Body of pancreas (tissue), 4 donors: ENCODE measurements at regions of chr10 and their contacts with region 1.

Region 1: DNA sequence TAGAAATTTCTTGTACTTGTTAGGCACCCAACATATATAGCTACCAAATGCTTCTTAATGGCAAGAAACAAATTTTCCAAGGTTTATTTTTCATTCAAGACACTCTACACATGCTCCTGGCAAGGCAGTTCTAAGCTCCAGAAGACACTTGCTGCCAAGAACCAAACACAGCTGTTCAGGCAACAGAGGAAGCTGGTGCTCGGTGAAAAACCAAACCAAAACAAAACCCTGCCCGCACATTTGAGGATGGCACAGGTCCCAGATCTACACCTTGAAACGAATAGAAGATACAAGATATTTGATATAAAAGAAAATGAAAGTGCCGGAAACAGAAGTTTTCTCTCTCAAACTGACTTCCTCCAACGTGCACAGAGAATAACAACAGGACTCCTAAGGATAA is 4.9 kb upstream of the DNTT start:
- DNase-seq: peak; percentile 15 to 42 (median 29)
- ATAC-seq: peak; percentile 45
- H3K4me3 ChIP-seq: no peak overlapping the region
- H3K27ac ChIP-seq: no peak overlapping the region
- H3K4me1 ChIP-seq: no peaks in the 10 kb centered on the region
- H3K27me3 ChIP-seq: no peaks in the 10 kb centered on the region
- CTCF ChIP-seq: no peak
- POLR2A ChIP-seq: no peak

Region 2: DNA sequence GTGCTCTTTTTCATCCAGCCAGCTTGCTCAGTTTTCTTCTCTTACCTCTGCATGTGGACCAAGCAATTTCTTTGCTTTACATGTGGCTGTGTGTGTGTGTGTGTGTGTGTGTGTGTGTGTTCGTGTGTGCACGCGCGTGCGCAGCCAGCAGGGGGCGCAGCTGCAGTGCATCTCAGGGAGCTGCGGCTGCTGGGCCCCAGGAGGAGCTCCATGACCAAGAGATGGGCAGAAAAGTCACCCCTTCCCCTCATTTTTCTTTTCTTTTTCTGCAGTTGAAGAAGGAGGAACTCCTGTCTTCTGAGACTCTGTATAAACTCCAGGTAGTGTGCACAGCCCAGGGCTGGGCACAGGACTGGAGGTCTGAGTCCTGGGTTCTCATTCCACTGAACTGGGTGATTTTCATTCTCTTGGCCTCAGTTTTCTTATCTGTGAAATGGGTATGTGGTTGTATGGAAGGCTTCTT is 69.8 kb before region 1 on chr10:
- intact Hi-C with region 1: loop called (anchors 5 kb)
- DNase-seq: peak; percentile 84 to 92 (median 84)
- ATAC-seq: peak; percentile 76
- H3K4me3 ChIP-seq: no peak overlapping the region
- H3K27ac ChIP-seq: no peak overlapping the region
- H3K4me1 ChIP-seq: peaks cover 13% of the 10 kb centered on the region
- H3K27me3 ChIP-seq: no peaks in the 10 kb centered on the region
- CTCF ChIP-seq: peak; percentile 73 to 100 (median 92)
- POLR2A ChIP-seq: no peak

Region 3: DNA sequence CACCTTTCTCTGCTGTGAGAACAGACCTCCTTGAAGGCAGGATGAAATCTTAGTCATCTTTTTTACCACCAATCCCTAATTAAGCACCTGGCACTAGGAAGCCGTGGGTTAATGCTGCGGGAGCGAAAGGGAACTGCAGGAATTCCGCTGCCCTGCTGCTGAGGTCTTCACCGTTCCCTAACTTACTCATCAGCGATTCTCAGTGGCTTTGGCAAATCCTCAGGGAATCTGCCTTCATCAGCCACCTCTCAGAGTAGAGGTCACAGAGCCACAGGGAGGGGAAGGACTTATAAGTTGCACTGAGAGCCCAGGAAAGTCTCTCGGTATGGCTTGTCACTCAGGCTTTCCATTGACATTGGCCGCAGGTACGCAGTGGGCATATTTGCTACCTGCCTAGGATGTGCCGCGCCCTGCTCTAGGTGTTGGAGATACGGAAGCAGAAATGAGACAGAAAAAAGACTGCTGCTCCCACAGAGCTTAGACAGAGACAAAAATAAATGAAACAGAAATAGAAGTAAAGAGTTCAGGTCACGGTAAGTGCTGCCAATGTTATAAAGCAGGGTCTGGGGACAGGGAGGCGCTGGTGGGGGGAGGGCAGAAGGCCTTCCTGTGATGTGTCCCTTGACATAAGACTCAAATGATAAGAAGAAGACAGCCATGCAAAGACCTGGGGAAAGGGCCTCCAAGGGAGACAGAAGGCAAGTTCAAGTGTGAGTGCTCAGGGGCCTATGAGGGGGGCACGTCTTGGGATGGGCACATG is 132.0 kb after region 1 on chr10:
- intact Hi-C with region 1: no loop called
- DNase-seq: no peak
- ATAC-seq: no peak
- H3K4me3 ChIP-seq: no peak overlapping the region
- H3K27ac ChIP-seq: no peak overlapping the region
- H3K4me1 ChIP-seq: no peaks in the 10 kb centered on the region
- H3K27me3 ChIP-seq: no peaks in the 10 kb centered on the region
- CTCF ChIP-seq: no peak
- POLR2A ChIP-seq: no peak

Region 4: GRCh38 chr10:96470116-96470743 is 170.8 kb after region 1 on chr10:
- intact Hi-C with region 1: no loop called
- DNase-seq: peak; percentile 22 to 40 (median 23)
- ATAC-seq: peak; percentile 42
- H3K4me3 ChIP-seq: no peak overlapping the region
- H3K27ac ChIP-seq: no peak overlapping the region
- H3K4me1 ChIP-seq: no peaks in the 10 kb centered on the region
- H3K27me3 ChIP-seq: no peaks in the 10 kb centered on the region
- CTCF ChIP-seq: peak in 6 of 7 experiments; percentile 16 to 46 (median 33)
- POLR2A ChIP-seq: no peak

Region 5: GRCh38 chr10:96826438-96826837 is 527.1 kb after region 1 on chr10:
- intact Hi-C with region 1: no loop called
- DNase-seq: no peak
- ATAC-seq: no peak
- H3K4me3 ChIP-seq: no peak overlapping the region
- H3K27ac ChIP-seq: no peak overlapping the region
- H3K4me1 ChIP-seq: peaks cover 9% of the 10 kb centered on the region
- H3K27me3 ChIP-seq: no peaks in the 10 kb centered on the region
- CTCF ChIP-seq: no peak
- POLR2A ChIP-seq: no peak